Activated naive CD4-positive, alpha-beta T cell treated with anti-CD3 and anti-CD28 coated beads for 36 hours (primary cell): ENCODE measurements at regions of chr17 and their contacts with region 1.

Region 1: DNA sequence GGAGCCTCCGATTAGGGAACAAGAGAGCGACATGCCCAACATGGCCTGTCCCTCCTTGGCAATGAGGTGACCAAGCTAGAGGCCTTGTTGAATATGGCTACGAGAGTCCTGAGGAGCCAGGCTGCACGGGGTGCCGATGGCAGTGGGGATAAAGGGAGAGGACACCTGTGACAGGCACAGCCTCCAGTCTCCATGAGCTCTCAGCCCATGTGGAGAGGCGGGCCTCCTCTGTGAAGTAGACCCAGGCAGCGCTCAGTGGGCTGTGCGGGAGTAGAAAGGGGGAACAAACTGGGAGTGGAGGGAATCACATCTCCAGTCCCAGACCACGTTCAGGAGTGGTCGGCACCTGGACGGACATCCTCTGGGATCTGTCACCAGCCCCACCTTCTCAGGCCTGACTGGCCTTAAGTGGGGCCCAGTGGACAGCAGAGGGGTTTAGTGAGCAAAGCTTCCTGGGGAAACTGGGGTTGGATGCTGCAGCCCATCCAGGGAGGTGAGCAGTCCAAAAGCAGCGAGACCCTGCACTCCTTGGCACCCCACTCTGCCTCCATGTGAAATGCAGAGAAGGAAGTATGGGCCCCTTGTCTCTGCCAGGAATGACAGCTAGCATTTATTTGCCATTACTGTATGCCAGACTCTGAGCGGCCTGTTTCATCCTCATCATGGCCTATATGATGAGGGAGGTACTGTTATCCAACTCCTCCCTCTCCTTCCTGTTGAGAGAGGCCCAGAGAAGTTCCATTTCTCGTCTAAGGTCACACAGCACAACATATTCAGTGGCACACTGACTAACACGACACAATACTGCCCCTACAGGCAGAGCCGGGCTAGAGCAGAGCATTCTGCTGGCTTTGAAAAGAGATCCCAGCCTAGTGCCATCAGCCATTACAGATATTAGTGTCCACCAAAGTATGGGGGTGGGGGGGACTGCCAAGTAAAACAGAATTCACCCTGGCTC is 4.5 kb upstream of the TMEM92 start:
- DNase-seq: peak; percentile 86
- H3K4me3 Mint-ChIP-seq: no peak overlapping the region
- H3K27ac Mint-ChIP-seq: no peak overlapping the region
- H3K4me1 Mint-ChIP-seq: peaks cover 13% of the 10 kb centered on the region
- H3K27me3 Mint-ChIP-seq: peaks cover 13% of the 10 kb centered on the region

Region 2: GRCh38 chr17:50169121-50169764 is 100.5 kb before region 1 on chr17:
- CTCF ChIA-PET with region 1: interaction called, 10 read pairs
- intact Hi-C with region 1: no loop called
- DNase-seq: peak; percentile 57
- H3K4me3 Mint-ChIP-seq: peak overlapping the region; percentile 46
- H3K27ac Mint-ChIP-seq: no peak overlapping the region
- H3K4me1 Mint-ChIP-seq: peaks cover 10% of the 10 kb centered on the region
- H3K27me3 Mint-ChIP-seq: no peaks in the 10 kb centered on the region

Region 3: GRCh38 chr17:50213026-50214022 is 56.4 kb before region 1 on chr17:
- CTCF ChIA-PET with region 1: interaction called, 21 read pairs
- intact Hi-C with region 1: no loop called
- DNase-seq: peak; percentile 89
- H3K4me3 Mint-ChIP-seq: no peak overlapping the region
- H3K27ac Mint-ChIP-seq: peak overlapping the region; percentile 17
- H3K4me1 Mint-ChIP-seq: peaks cover 29% of the 10 kb centered on the region
- H3K27me3 Mint-ChIP-seq: peaks cover 2% of the 10 kb centered on the region

Region 4: DNA sequence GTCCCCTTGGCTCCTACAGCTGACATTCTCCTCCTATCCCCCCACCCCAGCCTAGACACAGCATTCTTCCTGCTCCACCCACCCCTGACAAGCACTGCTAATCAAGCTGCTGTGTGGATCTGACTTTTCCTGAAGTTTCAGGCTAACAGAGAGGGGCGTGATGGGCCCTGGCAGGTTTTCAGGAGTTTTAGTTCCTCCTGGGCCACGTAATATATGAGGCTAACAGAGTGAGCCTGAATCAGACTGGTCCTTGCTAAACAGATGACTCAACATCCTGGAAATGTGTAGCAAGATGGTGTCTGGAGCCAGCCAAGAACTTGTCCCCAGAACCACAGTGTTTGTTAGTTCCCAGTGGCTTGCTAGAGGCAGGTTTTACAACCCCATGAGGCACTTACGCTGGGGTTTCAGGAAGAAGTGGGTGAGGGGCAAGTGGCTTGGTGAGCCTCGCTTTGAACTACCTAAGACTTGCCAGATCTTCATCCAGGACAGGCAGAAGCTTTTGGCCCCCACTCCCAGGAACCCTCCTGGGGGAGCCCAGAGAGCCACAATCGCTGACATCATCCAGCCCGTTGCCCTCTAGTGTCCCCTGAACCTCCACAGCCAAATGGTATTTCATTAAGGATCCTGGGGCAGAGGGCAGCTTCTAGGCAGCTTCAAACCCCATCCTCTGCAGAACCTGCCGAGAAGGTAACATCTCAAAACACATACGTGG is 20.4 kb after region 1 on chr17:
- CTCF ChIA-PET with region 1: interaction called, 55 read pairs
- intact Hi-C with region 1: no loop called
- DNase-seq: peak; percentile 52
- H3K4me3 Mint-ChIP-seq: no peak overlapping the region
- H3K27ac Mint-ChIP-seq: no peak overlapping the region
- H3K4me1 Mint-ChIP-seq: peaks cover 10% of the 10 kb centered on the region
- H3K27me3 Mint-ChIP-seq: peaks cover 11% of the 10 kb centered on the region

Region 5: DNA sequence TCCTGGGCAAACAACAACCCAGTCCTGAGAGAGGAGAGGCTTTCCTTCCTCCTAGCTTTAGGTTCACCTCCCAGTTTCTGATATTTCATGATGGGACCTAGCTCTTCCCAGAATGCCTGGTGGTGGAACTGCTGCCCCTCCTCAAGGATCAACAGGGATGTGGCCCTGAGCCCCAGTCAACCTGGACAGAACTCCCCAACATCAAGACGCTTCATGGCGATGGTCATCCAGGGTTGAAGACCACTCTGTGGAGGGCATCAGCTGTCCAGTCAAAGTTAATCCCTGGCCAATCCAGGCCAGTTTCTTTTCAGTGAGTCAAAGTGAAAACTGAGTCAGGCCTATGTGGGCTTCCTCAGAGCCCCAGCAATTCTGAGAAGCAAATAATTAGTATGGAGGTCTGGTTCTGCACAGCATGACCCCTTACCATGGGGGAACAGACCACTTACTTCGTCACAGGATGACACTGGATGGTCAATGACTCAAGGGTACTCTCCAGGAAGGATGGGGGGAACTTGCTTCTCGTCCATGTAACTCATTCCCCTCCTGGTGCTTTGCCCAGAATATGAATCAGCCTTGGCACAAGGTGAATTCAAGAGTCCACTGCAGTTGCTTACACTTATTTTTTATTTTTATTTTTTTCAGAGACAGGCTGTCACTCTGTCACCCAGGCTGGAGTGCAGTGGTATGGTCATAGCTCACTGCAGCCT is 61.5 kb after region 1 on chr17:
- CTCF ChIA-PET with region 1: interaction called, 6 read pairs
- intact Hi-C with region 1: loop called (anchors 1 kb)
- DNase-seq: no peak
- H3K4me3 Mint-ChIP-seq: no peak overlapping the region
- H3K27ac Mint-ChIP-seq: no peak overlapping the region
- H3K4me1 Mint-ChIP-seq: peaks cover 14% of the 10 kb centered on the region
- H3K27me3 Mint-ChIP-seq: no peaks in the 10 kb centered on the region

Region 6: GRCh38 chr17:50361561-50362480 is 92.1 kb after region 1 on chr17:
- CTCF ChIA-PET with region 1: no interaction called
- intact Hi-C with region 1: no loop called
- DNase-seq: peak; percentile 78
- H3K4me3 Mint-ChIP-seq: no peak overlapping the region
- H3K27ac Mint-ChIP-seq: peak overlapping the region; percentile 84
- H3K4me1 Mint-ChIP-seq: peaks cover 9% of the 10 kb centered on the region
- H3K27me3 Mint-ChIP-seq: no peaks in the 10 kb centered on the region